ENCODE measurements at regions of chr13 and their contacts with region 1.

Region 1: GRCh38 chr13:97165502-97166425 is 56.4 kb upstream of the MBNL2 start:
- DNase-seq: no peak
- ATAC-seq: no peak
- H3K4me3 ChIP-seq: no peak overlapping the region
- H3K27ac ChIP-seq: no peak overlapping the region
- H3K4me1 ChIP-seq: no peaks in the 10 kb centered on the region; the same call in 1 of the 2 replicates
- H3K27me3 ChIP-seq: no peaks in the 10 kb centered on the region
- CTCF ChIP-seq: no peak

Region 2: DNA sequence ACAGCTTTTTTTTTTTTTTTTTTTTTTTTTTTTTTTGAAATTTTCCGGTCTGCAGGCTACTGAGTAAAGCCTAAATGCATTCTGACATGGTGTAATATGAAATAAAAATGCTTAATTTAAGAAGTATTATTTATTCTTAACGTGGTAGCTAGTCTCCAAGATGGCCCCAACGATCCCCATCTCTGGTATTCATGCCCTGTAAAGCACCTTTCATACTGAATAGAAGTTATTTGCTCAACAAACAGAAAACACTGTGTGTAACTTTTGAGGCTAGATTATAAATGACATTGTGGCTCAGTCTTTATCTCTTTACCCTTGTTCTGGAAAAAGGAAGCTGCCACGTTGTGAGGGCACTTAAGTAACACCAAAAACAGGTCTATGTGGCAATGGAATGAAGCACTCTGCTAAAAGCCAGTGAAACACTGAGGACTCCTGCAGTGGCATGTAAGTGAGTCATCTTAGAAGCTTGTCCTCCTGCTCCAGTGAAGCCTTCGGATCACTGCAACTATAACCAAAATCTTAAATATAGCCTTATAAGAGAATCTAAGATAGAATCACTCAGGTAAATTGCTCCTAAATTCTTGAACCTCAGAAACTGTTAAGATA is 1241.3 kb before region 1 on chr13:
- CTCF ChIA-PET with region 1: no interaction called
- POLR2A ChIA-PET with region 1: interaction called, 10 read pairs
- in situ Hi-C with region 1: no loop called
- intact Hi-C with region 1: no loop called
- DNase-seq: peak; percentile 7
- ATAC-seq: peak; percentile 83
- H3K4me3 ChIP-seq: no peak overlapping the region
- H3K27ac ChIP-seq: no peak overlapping the region
- H3K4me1 ChIP-seq: peaks cover 9% of the 10 kb centered on the region; the same call in 1 of the 2 replicates
- H3K27me3 ChIP-seq: no peaks in the 10 kb centered on the region
- CTCF ChIP-seq: no peak

Region 3: DNA sequence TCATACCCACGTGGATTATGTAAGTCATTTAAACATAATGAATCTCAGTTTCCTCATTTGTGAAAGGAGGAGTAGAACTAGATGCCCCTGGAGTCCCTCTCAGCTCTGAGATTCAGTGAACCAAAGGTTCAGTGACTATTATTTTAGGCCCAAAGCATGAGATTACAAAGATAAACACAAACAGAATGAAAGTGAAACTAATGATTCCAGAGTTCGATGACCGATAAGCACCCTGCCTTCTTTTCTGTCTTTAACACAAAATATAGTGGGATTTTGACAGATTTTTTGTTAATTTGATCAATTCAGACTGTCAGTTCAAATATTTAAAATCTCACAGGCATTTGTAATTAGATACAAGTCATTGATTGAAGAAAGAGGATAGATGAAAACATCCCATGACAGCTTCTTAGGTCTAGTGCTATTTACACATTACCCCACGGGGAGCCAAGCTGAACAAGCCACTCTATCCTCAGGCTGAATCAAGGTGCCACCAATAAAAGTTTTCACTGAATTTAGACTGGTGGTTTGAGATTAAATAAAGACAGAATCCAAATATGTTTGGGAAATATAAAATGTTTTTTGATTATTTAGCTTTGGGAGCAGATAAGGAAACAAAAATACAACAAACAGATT is 203.6 kb after region 1 on chr13:
- CTCF ChIA-PET with region 1: no interaction called
- POLR2A ChIA-PET with region 1: no interaction called
- in situ Hi-C with region 1: no loop called
- intact Hi-C with region 1: no loop called
- DNase-seq: no peak
- ATAC-seq: no peak
- H3K4me3 ChIP-seq: 0 out of 4 replicates have a peak overlapping the region, but pooled peaks of 1 of the 2 experiments have one; percentile 8
- H3K27ac ChIP-seq: peak overlapping the region; percentile 68
- H3K4me1 ChIP-seq: peaks cover 37% of the 10 kb centered on the region
- H3K27me3 ChIP-seq: no peaks in the 10 kb centered on the region
- CTCF ChIP-seq: no peak

Region 4: GRCh38 chr13:97986835-97987234 is 821.1 kb after region 1 on chr13:
- CTCF ChIA-PET with region 1: no interaction called
- POLR2A ChIA-PET with region 1: no interaction called
- in situ Hi-C with region 1: no loop called
- intact Hi-C with region 1: no loop called
- DNase-seq: no peak
- ATAC-seq: no peak
- H3K4me3 ChIP-seq: no peak overlapping the region
- H3K27ac ChIP-seq: no peak overlapping the region
- H3K4me1 ChIP-seq: no peaks in the 10 kb centered on the region
- H3K27me3 ChIP-seq: no peaks in the 10 kb centered on the region
- CTCF ChIP-seq: no peak

Measured in Panc1 (cell line).